ENCODE measurements at regions of chr14 and their contacts with region 1.

Region 1: DNA sequence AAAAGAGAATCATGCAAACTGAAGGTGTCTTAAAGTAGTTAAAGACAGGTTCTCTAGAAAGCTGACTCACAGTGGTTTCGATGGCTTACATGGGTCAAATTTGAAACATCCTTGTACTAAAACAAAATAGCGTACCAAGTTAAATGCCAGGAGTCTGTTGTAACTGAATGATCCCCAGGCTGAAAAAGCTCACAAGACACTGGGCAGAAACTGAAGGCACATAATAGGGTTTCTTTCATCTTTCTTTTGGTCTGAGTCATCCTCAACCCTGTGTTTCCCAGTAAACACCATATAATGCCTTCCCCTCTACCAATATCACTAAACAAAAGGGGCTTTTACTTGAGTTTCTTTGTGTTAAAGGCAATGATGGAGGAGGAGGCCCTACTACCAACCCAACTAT is 12.8 kb downstream of the ZFYVE1 start:
- DNase-seq: no peak
- H3K4me3 ChIP-seq: no peak overlapping the region
- H3K27ac ChIP-seq: no peak overlapping the region
- H3K4me1 ChIP-seq: no peaks in the 10 kb centered on the region
- H3K27me3 ChIP-seq: no peaks in the 10 kb centered on the region
- CTCF ChIP-seq: no peak

Region 2: DNA sequence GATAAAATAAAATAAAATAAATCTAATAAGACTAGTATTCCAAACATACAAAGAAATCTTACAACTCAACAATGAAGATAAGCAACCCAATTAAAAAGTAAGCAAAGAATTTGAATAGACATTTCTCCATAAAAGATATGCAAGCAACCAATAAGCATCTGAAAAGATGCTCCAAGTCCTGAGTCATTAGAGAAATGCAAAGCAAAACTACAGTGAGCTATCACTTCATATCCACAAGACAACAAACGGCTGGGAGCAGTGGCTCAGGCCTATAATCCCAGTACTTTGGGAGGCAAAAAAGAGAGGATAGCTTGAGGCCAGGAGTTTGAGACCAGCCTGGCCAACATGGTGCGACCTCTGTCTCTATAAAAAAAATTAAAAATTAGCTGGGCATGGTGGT is 14.0 kb before region 1 on chr14:
- CTCF ChIA-PET with region 1: no interaction called
- POLR2A ChIA-PET with region 1: interaction called, 15 read pairs
- intact Hi-C with region 1: no loop called
- DNase-seq: no peak
- H3K4me3 ChIP-seq: no peak overlapping the region
- H3K27ac ChIP-seq: no peak overlapping the region
- H3K4me1 ChIP-seq: no peaks in the 10 kb centered on the region
- H3K27me3 ChIP-seq: no peaks in the 10 kb centered on the region
- CTCF ChIP-seq: no peak

Region 3: DNA sequence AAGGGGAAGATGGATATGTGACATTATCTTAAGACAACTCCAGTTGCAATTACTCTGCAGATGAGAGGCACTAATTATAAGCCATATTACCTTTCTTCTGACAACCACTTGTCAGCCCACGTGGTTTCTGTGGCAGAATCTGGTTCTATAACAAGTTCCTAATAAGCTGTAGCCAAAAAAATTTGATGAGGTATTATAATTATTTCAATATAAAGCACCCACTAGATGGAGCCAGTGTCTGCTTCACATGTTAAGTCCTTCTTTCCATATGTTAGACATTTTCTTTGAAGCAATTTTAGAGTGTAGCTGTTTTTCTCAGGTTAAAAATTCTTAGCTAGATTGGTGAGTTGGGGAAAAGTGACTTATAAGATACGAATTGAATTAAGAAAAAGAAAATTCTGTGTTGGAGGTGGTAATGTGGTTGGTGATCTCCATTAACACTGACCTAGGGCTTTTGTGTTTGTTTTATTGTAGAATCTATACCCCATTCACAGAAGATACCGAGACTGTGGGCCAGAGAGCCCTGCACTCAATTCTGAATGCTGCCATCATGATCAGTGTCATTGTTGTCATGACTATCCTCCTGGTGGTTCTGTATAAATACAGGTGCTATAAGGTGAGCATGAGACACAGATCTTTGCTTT is 159.1 kb after region 1 on chr14:
- CTCF ChIA-PET with region 1: no interaction called
- POLR2A ChIA-PET with region 1: no interaction called
- intact Hi-C with region 1: no loop called
- DNase-seq: peak; percentile 63
- H3K4me3 ChIP-seq: no peak overlapping the region
- H3K27ac ChIP-seq: no peak overlapping the region
- H3K4me1 ChIP-seq: no peaks in the 10 kb centered on the region
- H3K27me3 ChIP-seq: no peaks in the 10 kb centered on the region
- CTCF ChIP-seq: peak; percentile 65

Measured in A673 (cell line).